CD14-positive monocyte (primary cell): ENCODE measurements at regions of chr2 and their contacts with region 1.

Region 1: DNA sequence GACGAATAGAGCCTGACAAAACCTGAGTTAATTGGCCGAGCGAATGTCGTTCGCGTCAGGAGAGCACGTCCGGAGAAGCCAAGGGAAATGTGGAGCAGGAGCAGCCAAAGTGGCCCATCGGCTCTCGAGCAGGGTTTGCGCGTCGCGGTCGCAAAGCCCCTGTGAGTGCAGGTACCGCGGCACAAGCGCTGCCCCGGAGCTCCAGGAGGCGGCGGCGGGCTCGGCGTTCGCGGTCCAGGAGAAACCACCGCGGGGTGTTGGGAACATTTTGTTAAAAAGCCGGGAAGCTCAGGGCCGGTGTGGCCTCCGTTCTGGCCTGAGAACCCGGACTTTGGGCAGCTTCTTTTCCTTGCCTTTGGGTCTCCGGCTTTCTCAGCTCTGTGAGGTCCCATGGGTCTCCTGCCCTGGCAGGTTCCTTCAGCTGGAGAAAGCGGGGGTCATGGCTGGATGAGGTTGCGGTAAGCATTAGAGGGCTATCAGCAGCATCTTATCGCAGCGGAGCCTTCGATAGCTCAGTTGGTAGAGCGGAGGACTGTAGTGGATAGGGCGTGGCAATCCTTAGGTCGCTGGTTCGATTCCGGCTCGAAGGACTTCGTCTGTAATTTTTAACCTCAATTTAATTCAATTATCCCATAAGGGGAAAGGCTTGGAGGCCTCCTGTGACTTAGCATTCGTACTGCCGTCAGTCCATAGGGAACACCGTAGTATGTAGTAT is 1.0 kb upstream of the AGBL5 start:
- DNase-seq: peak; percentile 84 to 92 (median 86)
- H3K4me3 ChIP-seq: peak overlapping the region; percentile 59 to 85 (median 64)
- H3K4me3 Mint-ChIP-seq: peak overlapping the region; percentile 97
- H3K27ac ChIP-seq: peak overlapping the region in 1 of 2 donors; percentile 75
- H3K27ac Mint-ChIP-seq: peak overlapping the region; percentile 35 to 95 (median 89)
- H3K4me1 ChIP-seq: peaks cover 19 to 30% of the 10 kb centered on the region in 2 donors
- H3K4me1 Mint-ChIP-seq: peaks cover 19% of the 10 kb centered on the region
- H3K27me3 ChIP-seq: peaks cover 0 to 6% of the 10 kb centered on the region in 2 donors
- H3K27me3 Mint-ChIP-seq: peaks cover 5 to 15% (median 12%) of the 10 kb centered on the region in 3 donors
- CTCF ChIP-seq: peak; percentile 28

Region 2: GRCh38 chr2:27086090-27086723 is 35.8 kb after region 1 on chr2:
- intact Hi-C with region 1: loop called (anchors 5 kb)
- DNase-seq: peak; percentile 92 to 94 (median 93)
- H3K4me3 ChIP-seq: peak overlapping the region; percentile 56 to 77 (median 71)
- H3K4me3 Mint-ChIP-seq: peak overlapping the region; percentile 85 to 86
- H3K27ac ChIP-seq: peak overlapping the region; percentile 70 to 84
- H3K27ac Mint-ChIP-seq: peak overlapping the region; percentile 31 to 88 (median 85)
- H3K4me1 ChIP-seq: peaks cover 34 to 41% of the 10 kb centered on the region in 2 donors
- H3K4me1 Mint-ChIP-seq: peaks cover 31% of the 10 kb centered on the region
- H3K27me3 ChIP-seq: no peaks in the 10 kb centered on the region
- H3K27me3 Mint-ChIP-seq: peaks cover 0 to 7% (median 5%) of the 10 kb centered on the region in 3 donors
- CTCF ChIP-seq: peak; percentile 92